Sigmoid colon (tissue), 7 donors: ENCODE measurements at regions of chr7 and their contacts with region 1.

Region 1: GRCh38 chr7:44748045-44748947 is at the start of gene ZMIZ2:
- DNase-seq: peak; percentile 97
- H3K4me3 ChIP-seq: peak within 1 kb of the TSS; percentile 56 to 96 (median 78)
- H3K27ac ChIP-seq: peak within 1 kb of the TSS; percentile 94 to 97 (median 95)
- H3K4me1 ChIP-seq: peaks cover 0 to 32% (median 23%) of the 10 kb centered on the region in 4 donors
- H3K27me3 ChIP-seq: no peaks in the 10 kb centered on the region
- CTCF ChIP-seq: no peak
- EP300 ChIP-seq: no peak
- POLR2A ChIP-seq: peak in 1 of 2 donors; percentile 13
- total RNA-seq, gene ZMIZ2: 11.1 to 44.6 (median 12.5) TPM

Region 2: GRCh38 chr7:44200647-44201461 is 547.4 kb before region 1 on chr7 and contains the start of gene YKT6:
- intact Hi-C with region 1: loop called (anchors 5 kb)
- DNase-seq: peak; percentile 97
- H3K4me3 ChIP-seq: peak within 1 kb of the TSS; percentile 80 to 99 (median 90)
- H3K27ac ChIP-seq: peak within 1 kb of the TSS; percentile 78 to 86 (median 80)
- H3K4me1 ChIP-seq: peaks cover 0 to 17% (median 14%) of the 10 kb centered on the region in 4 donors
- H3K27me3 ChIP-seq: peaks cover 0 to 7% (median 0%) of the 10 kb centered on the region in 3 donors
- CTCF ChIP-seq: peak; percentile 37 to 69 (median 54)
- EP300 ChIP-seq: no peak
- POLR2A ChIP-seq: peak; percentile 30 to 63
- total RNA-seq, gene YKT6: 39.2 to 50.1 (median 44.5) TPM

Region 3: DNA sequence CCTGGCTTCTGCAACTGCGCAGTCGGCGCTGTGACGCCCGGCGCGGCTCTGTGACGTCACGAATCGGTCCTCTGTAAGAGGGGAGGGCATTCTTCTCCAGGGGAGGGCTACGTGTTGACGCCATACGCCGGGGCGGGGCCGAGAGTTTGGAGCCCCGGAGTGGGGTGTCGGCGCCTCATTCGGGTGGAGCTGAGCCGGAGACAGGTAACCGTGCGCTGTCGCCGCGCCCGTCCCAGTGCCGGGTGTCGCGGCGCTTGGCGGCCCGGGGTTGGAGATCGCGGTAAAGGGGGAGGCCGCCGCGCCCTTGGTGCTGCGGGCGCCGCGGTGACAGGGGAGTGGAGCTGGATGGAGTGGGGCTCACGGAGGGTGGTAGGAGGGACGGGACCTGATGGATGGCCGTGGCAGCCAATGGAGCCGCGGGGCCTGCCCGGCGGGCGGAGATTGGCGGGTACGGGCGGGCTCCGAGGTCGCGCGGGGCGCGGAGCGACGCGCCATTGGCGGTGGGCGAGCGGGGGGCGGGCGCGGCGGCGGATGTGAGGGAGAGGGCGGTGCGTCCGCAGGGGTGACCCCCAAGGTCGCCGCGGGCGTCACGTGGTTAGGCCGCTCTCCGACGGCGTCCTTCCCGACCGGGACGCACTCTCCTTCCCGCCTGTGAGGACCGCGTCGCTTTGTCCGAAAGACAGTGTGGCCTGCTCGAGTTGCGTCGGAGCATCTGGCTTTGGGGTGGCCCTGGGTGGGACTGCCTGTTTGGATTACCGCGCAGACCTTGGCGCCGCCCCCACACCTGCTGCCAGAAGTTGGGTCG is 141.6 kb before region 1 on chr7 and contains the start of gene OGDH:
- intact Hi-C with region 1: loop called (anchors 1 kb)
- DNase-seq: peak; percentile 100
- H3K4me3 ChIP-seq: peak within 1 kb of the TSS; percentile 70 to 97 (median 78)
- H3K27ac ChIP-seq: peak within 1 kb of the TSS; percentile 97 to 100 (median 98)
- H3K4me1 ChIP-seq: peaks cover 0 to 32% (median 25%) of the 10 kb centered on the region in 4 donors
- H3K27me3 ChIP-seq: no peaks in the 10 kb centered on the region
- CTCF ChIP-seq: no peak
- EP300 ChIP-seq: peak in 2 of 4 donors; percentile 66 to 86
- POLR2A ChIP-seq: peak; percentile 57 to 97
- total RNA-seq, gene OGDH: 65.5 to 102 (median 98.3) TPM

Region 4: DNA sequence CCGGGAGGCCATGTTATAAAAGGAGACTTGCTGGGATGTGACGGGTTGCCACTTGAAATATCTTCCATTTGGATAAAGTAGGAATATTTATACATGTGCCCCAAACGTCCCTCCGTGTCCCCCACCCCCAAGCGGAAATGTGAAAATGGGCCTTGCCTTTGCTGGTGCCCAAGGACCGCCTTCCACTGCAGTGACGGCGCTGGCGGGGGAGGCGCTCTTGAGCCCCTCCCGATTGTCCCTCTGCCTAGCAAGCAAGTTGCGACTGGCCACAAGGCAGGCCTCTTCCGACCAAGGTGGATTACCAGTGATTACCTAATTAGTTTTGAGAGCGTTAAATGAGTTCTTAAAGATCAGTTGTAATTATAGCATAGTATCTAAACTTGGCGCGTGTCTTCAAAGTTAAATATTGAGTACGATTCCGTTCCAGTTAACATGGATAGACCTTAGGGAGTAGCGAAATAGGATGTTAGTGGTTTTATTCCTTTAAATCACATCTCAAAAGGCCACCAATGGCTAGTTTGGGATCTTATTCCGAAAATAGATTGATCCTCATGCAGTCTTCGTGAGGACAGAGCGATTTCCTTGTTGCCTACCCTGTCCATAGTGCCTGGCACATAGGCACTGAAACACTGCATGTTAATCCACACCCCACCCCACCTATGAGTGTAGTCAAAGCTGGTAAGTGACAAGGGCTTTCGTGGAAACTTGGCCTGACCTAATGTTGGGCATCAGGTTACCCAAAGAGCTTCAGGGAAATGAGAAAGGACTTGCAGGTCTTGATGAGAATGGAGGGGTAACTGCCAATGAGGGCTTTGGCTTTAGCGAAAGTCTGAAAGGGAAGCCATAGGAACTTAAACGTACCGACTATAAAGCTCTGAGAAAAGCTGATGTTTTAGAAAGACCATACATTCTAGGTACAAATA is 49.3 kb after region 1 on chr7:
- intact Hi-C with region 1: loop called (anchors 1 kb)
- DNase-seq: peak; percentile 95
- H3K4me3 ChIP-seq: peak overlapping the region; percentile 76 to 97 (median 95)
- H3K27ac ChIP-seq: peak overlapping the region; percentile 99 to 100 (median 100)
- H3K4me1 ChIP-seq: peaks cover 0 to 35% (median 26%) of the 10 kb centered on the region in 4 donors
- H3K27me3 ChIP-seq: no peaks in the 10 kb centered on the region
- CTCF ChIP-seq: peak in 2 of 4 experiments; percentile 31 to 35
- EP300 ChIP-seq: no peak
- POLR2A ChIP-seq: peak; percentile 10 to 29